ENCODE measurements at regions of chr1 and their contacts with region 1.

Region 1: DNA sequence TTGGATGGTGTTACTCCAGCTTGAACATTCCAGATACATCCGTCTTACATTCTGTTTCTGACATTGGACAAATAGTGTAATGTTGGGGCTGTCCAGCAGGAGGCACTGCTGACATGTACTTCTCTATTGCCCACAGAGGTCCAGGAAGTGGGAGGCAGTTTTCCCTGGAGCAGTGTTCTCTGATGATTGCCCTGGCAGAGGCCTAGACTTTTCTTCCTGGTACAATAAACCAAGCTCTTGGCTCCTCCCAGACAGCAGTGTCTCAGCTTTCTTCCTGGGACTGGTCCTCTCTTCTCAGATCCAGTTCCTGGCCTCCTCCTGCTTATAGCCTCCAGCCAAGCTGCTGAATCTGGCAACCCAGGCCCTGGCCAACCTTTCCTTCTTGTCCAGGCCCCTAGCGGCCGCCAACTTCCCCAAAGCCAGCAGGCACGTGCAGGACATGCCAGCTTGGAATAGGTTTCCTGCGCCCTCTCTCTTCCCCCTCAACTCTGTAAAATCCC is 14.9 kb upstream of the IFNLR1 start:
- DNase-seq: no peak
- H3K4me3 ChIP-seq: no peak overlapping the region
- H3K27ac ChIP-seq: peak overlapping the region; percentile 73 to 91 (median 81)
- H3K4me1 ChIP-seq: peaks cover 21 to 64% (median 34%) of the 10 kb centered on the region in 3 donors
- H3K27me3 ChIP-seq: peaks cover 0 to 7% (median 0%) of the 10 kb centered on the region in 4 donors
- CTCF ChIP-seq: peak; percentile 77 to 98 (median 93)
- POLR2A ChIP-seq: no peak

Region 2: DNA sequence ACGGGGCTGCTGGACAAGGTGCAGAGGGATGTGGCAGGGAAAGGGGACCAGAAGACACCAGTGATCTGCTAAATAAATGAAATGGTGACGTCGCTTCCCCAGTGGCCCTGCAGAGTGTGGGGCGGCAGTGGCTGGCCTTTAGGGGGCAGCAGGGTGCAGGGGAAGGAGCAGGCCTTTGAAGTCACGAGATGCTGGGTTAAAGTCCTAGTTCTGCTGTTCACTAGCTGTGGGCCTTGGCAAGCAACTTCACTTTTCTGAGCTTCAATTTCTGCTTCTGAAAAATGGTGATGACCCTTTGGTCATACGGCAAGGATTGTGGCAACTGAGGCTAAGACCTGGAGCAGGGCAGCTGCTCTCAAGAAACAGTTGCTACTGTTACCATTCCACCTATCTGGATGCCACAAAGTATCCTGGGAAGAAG is 392.2 kb before region 1 on chr1:
- intact Hi-C with region 1: no loop called
- DNase-seq: peak; percentile 26
- H3K4me3 ChIP-seq: no peak overlapping the region
- H3K27ac ChIP-seq: peak overlapping the region in 2 of 4 donors; percentile 3 to 42
- H3K4me1 ChIP-seq: peaks cover 0 to 18% (median 0%) of the 10 kb centered on the region in 3 donors
- H3K27me3 ChIP-seq: no peaks in the 10 kb centered on the region
- CTCF ChIP-seq: peak; percentile 56 to 86 (median 76)
- POLR2A ChIP-seq: no peak

Region 3: GRCh38 chr1:24235921-24236781 is 34.2 kb after region 1 on chr1:
- intact Hi-C with region 1: no loop called
- DNase-seq: no peak
- H3K4me3 ChIP-seq: no peak overlapping the region
- H3K27ac ChIP-seq: peak overlapping the region; percentile 34 to 80 (median 53)
- H3K4me1 ChIP-seq: peaks cover 13 to 39% (median 20%) of the 10 kb centered on the region in 3 donors
- H3K27me3 ChIP-seq: no peaks in the 10 kb centered on the region
- CTCF ChIP-seq: no peak
- POLR2A ChIP-seq: no peak

Region 4: DNA sequence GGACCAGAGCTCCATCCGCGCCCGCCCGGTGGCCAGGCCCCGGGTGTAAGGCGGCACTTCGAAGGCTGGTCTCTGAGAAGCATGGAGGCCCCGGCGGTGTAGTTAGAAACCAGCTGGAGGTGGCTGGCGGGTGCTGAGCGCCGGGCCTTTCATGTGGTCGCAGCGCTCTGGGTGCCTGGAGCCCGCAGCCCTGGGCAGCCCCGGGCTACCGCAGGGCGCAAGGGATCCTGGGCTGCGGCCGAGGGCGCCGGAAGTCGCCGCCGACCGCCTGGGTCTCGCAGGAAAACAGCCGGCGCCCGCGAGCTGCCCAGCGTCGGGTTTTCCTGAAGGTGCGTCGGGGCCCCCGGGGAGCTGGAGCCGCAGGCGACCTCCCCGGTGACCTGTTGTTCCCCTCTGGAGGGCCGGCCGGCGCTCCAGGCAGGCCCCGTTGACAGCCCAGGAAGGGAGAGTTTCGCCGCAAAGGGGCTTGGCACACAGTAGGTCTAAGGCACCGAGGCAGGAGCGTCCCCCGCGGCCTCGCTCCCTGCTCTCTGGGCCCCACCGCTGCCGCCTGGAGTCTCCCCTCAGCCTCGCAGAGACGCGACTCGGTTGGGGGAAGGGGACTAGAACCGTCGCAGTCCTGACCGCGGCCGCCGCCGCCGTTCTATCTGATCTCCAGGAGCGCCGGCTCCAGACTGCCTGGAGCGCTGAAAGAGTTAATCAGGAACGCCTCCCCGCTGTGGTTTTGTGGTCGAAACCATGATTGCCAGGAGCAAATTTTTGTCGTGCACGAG is 119.9 kb after region 1 on chr1:
- intact Hi-C with region 1: loop called (anchors 10 kb)
- DNase-seq: no peak
- H3K4me3 ChIP-seq: peak overlapping the region; percentile 55 to 70 (median 68)
- H3K27ac ChIP-seq: peak overlapping the region; percentile 89 to 97 (median 94)
- H3K4me1 ChIP-seq: peaks cover 24 to 93% (median 39%) of the 10 kb centered on the region in 3 donors
- H3K27me3 ChIP-seq: peaks cover 0 to 35% (median 0%) of the 10 kb centered on the region in 4 donors
- CTCF ChIP-seq: no peak
- POLR2A ChIP-seq: peak in 1 of 4 donors; percentile 41

Region 5: GRCh38 chr1:24391882-24392603 is 190.1 kb after region 1 on chr1:
- intact Hi-C with region 1: loop called (anchors 2 kb)
- DNase-seq: no peak
- H3K4me3 ChIP-seq: peak overlapping the region in 3 of 4 donors; percentile 16 to 32 (median 21)
- H3K27ac ChIP-seq: peak overlapping the region; percentile 71 to 91 (median 90)
- H3K4me1 ChIP-seq: peaks cover 0 to 71% (median 20%) of the 10 kb centered on the region in 3 donors
- H3K27me3 ChIP-seq: no peaks in the 10 kb centered on the region
- CTCF ChIP-seq: peak; percentile 69 to 90 (median 85)
- POLR2A ChIP-seq: no peak

Measured in esophagus squamous epithelium (tissue), 5 donors.